ENCODE measurements at regions of chr4 and their contacts with region 1.

Region 1: DNA sequence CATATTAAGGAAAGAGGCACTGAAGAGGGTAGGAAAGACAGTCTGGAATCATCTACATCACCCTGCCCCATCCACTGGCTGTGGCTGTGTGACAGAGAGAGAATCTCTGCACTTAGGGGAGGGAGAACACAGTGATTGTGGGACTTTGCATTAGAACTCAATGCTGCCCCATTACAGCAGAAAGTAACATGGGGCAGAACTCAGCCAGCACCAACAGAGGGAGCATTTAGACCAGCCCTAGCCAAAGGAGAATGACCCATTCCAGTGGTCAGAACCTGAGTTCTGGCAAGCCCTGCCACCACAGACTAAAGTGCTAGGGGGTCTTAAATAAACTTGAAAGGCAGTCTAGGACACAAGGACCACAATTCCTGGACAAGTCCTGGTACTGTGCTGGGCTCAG is 37.9 kb downstream of the ZNF330 start:
- DNase-seq: no peak
- ATAC-seq: no peak
- H3K4me3 ChIP-seq: no peak overlapping the region
- H3K4me3 Mint-ChIP-seq: no peak overlapping the region
- H3K27ac ChIP-seq: no peak overlapping the region
- H3K27ac Mint-ChIP-seq: no peak overlapping the region
- H3K4me1 ChIP-seq: no peaks in the 10 kb centered on the region
- H3K4me1 Mint-ChIP-seq: no peaks in the 10 kb centered on the region
- H3K27me3 ChIP-seq: peaks cover 0 to 13% of the 10 kb centered on the region in 2 experiments
- H3K27me3 Mint-ChIP-seq: peaks cover 15 to 25% of the 10 kb centered on the region in 2 donors

Region 2: GRCh38 chr4:140271553-140271952 is 987.0 kb before region 1 on chr4:
- CTCF ChIA-PET with region 1: no interaction called
- POLR2A ChIA-PET with region 1: interaction called in 1 of 2 experiments, 10 read pairs
- DNase-seq: no peak
- ATAC-seq: no peak
- H3K4me3 ChIP-seq: no peak overlapping the region
- H3K4me3 Mint-ChIP-seq: no peak overlapping the region
- H3K27ac ChIP-seq: no peak overlapping the region
- H3K27ac Mint-ChIP-seq: no peak overlapping the region
- H3K4me1 ChIP-seq: no peaks in the 10 kb centered on the region
- H3K4me1 Mint-ChIP-seq: no peaks in the 10 kb centered on the region
- H3K27me3 ChIP-seq: peaks cover 0 to 13% of the 10 kb centered on the region in 2 experiments
- H3K27me3 Mint-ChIP-seq: peaks cover 0 to 2% of the 10 kb centered on the region in 2 donors

Region 3: DNA sequence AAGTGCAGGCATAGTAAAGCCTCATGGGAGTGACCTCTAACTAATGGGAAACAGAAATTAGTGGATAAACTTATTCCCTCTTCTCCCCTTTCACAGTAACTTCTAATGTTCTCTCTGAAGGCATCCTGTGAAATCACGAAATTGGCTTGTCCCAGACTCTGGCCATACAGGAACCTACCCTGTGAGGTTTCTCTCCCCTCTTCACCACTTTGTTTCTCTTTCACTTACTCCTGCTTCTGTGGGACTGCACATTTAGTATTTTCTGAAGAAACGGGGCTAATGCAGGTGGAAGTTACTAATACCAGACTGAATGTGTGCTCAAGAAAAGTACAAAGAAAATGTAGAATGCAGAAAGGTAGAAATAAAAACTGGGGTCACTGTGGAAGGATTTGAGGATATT is 17.9 kb before region 1 on chr4:
- CTCF ChIA-PET with region 1: no interaction called
- POLR2A ChIA-PET with region 1: no interaction called
- DNase-seq: no peak
- ATAC-seq: no peak
- H3K4me3 ChIP-seq: no peak overlapping the region
- H3K4me3 Mint-ChIP-seq: no peak overlapping the region
- H3K27ac ChIP-seq: no peak overlapping the region
- H3K27ac Mint-ChIP-seq: no peak overlapping the region
- H3K4me1 ChIP-seq: no peaks in the 10 kb centered on the region
- H3K4me1 Mint-ChIP-seq: no peaks in the 10 kb centered on the region
- H3K27me3 ChIP-seq: no peaks in the 10 kb centered on the region
- H3K27me3 Mint-ChIP-seq: peaks cover 0 to 4% of the 10 kb centered on the region in 2 donors